Activated B cell treated with CpG ODN at 0.5 μM for 24 hours (primary cell): ENCODE measurements at regions of chr7 and their contacts with region 1.

Region 1: GRCh38 chr7:38171623-38172391 is 6.2 kb upstream of the STARD3NL start:
- DNase-seq: no peak
- ATAC-seq: peak; percentile 40
- H3K4me3 Mint-ChIP-seq: no peak overlapping the region
- H3K27ac Mint-ChIP-seq: no peak overlapping the region
- H3K4me1 Mint-ChIP-seq: peaks cover 13% of the 10 kb centered on the region
- H3K27me3 Mint-ChIP-seq: no peaks in the 10 kb centered on the region
- CTCF ChIP-seq: no peak

Region 2: DNA sequence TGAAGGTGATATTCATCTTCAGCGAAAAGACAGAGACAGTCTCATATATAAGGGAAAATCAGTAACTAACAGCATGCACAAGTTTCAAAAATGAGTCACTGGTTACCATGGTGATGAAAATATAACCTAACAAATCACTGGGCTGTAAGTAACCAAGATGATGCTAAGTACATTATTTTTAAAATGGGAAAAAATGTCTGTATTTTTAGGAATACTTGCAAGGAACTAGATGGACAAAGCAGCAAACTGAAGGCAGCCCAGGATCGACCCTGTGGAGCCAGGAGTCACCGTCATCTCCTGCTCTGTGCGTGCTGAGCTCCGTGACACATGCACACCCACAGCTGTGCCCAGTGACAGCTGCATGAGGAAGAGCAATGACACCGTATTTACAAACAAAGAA is 860.5 kb before region 1 on chr7:
- CTCF ChIA-PET with region 1: no interaction called
- POLR2A ChIA-PET with region 1: no interaction called
- intact Hi-C with region 1: no loop called
- DNase-seq: no peak
- ATAC-seq: peak; percentile 74
- H3K4me3 Mint-ChIP-seq: no peak overlapping the region
- H3K27ac Mint-ChIP-seq: peak overlapping the region; percentile 77
- H3K4me1 Mint-ChIP-seq: peaks cover 73% of the 10 kb centered on the region
- H3K27me3 Mint-ChIP-seq: no peaks in the 10 kb centered on the region
- CTCF ChIP-seq: no peak

Region 3: GRCh38 chr7:37705976-37706375 is 465.8 kb before region 1 on chr7:
- CTCF ChIA-PET with region 1: no interaction called
- POLR2A ChIA-PET with region 1: no interaction called
- intact Hi-C with region 1: no loop called
- DNase-seq: no peak
- ATAC-seq: no peak
- H3K4me3 Mint-ChIP-seq: no peak overlapping the region
- H3K27ac Mint-ChIP-seq: no peak overlapping the region
- H3K4me1 Mint-ChIP-seq: no peaks in the 10 kb centered on the region
- H3K27me3 Mint-ChIP-seq: peaks cover 19% of the 10 kb centered on the region
- CTCF ChIP-seq: no peak

Region 4: DNA sequence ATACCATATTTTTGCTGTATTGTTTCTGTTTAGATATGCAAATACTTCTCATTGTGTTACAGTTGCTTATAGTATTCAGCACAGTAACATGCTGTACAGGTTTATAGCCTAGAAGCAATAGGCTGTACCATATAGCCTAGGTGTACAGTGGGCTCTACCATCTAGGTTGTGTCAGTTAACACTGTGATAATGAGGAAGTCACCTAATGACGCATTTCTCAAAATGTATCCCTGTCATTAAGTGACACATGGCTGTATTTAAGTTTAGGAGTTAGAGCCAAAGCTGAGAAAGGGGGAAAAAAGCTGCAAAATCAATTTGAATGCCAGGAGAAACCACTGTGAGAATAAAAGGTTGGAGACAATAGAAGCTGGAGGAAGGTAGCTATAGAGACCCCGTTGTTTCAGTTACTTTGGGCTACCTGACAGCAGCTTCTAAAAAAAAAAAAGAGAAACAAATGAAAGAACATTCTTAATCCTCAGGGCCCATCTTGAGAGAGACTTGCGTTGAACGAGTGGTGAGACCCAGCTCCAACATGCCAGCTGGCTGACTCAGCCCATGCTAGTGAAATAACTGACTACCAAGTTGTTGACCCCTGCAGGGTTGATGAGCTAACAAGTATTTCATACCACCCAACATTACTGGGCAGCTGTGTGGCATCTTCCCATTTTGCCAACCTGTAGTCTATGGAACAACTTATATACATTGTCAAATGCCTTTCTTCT is 14.9 kb after region 1 on chr7:
- CTCF ChIA-PET with region 1: no interaction called
- POLR2A ChIA-PET with region 1: no interaction called
- intact Hi-C with region 1: loop called (anchors 2 kb)
- DNase-seq: no peak
- ATAC-seq: peak; percentile 60
- H3K4me3 Mint-ChIP-seq: no peak overlapping the region
- H3K27ac Mint-ChIP-seq: no peak overlapping the region
- H3K4me1 Mint-ChIP-seq: peaks cover 67% of the 10 kb centered on the region
- H3K27me3 Mint-ChIP-seq: no peaks in the 10 kb centered on the region
- CTCF ChIP-seq: no peak

Region 5: DNA sequence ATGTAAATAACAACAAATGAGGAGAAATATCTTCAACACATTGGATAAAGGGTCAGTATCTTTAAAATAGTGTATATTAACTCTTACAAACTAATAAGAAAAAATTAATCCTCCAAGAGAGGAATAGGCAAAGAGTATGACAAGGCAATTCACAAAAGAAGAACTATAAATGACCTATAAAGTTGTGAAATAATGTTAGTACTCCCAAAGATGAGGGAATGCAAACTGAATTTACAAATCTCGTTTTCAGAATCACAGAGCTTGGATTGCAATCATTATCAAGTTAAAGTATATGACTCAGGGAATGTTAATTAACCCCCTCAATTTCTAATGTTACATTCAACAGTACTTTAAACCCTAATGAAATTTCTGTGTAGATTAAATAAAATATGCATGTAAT is 189.0 kb after region 1 on chr7:
- CTCF ChIA-PET with region 1: no interaction called
- POLR2A ChIA-PET with region 1: no interaction called
- intact Hi-C with region 1: no loop called
- DNase-seq: no peak
- ATAC-seq: no peak
- H3K4me3 Mint-ChIP-seq: no peak overlapping the region
- H3K27ac Mint-ChIP-seq: no peak overlapping the region
- H3K4me1 Mint-ChIP-seq: peaks cover 49% of the 10 kb centered on the region
- H3K27me3 Mint-ChIP-seq: no peaks in the 10 kb centered on the region
- CTCF ChIP-seq: no peak